AG04450 (cell line): ENCODE measurements at regions of chr13 and their contacts with region 1.

Region 1: GRCh38 chr13:45280751-45281634 is 60.0 kb downstream of the TPT1 start:
- DNase-seq: peak; percentile 54
- H3K4me3 ChIP-seq: no peak overlapping the region
- H3K27ac ChIP-seq: no peak overlapping the region
- H3K27me3 ChIP-seq: no peaks in the 10 kb centered on the region
- CTCF ChIP-seq: peak; percentile 88

Region 2: DNA sequence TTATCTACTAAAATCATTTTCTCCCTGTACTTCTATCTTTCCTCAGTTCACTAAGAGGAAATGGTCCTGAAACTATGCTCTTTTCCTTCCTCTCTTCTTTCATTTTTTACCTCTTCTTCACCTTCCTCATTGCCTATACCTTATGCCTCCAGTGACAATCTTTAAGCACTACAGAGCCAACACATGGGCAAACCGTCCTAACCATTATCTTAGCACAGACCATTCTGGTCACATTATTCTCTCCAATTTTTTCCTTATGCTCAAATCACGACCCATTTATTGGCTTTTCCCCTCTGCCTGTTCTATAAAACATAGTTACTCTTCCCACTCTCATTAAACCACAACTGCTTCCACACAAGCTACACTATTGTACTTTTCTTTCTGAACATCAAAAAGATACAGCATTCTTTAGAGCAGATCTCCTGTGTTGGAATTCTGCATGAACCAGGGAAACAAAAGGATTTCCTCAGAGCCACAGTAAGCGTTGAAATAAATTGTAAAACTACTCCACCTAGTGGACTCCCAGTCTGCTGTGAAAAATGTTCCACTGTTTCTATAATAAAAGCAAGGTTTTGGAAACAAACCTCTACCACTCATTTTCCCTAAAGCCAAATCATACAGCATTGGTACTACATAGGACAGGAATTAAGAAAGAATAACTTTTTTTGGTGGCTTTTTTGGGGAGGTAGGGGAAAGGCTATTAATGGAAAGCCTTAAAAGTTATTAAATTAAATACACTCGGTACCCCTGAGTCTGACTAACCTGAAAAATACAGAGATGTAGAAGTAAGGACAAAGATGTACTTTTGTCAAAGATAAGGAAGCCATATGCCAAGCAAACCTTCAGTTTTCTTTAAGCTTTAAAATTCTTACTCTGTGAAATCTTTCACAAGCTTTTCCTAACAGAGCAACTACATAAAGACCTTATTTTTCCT is 311.2 kb before region 1 on chr13:
- CTCF ChIA-PET with region 1: interaction called, 12 read pairs
- POLR2A ChIA-PET with region 1: no interaction called
- DNase-seq: peak; percentile 34
- H3K4me3 ChIP-seq: no peak overlapping the region
- H3K27ac ChIP-seq: no peak overlapping the region
- H3K27me3 ChIP-seq: no peaks in the 10 kb centered on the region
- CTCF ChIP-seq: peak; percentile 73

Region 3: DNA sequence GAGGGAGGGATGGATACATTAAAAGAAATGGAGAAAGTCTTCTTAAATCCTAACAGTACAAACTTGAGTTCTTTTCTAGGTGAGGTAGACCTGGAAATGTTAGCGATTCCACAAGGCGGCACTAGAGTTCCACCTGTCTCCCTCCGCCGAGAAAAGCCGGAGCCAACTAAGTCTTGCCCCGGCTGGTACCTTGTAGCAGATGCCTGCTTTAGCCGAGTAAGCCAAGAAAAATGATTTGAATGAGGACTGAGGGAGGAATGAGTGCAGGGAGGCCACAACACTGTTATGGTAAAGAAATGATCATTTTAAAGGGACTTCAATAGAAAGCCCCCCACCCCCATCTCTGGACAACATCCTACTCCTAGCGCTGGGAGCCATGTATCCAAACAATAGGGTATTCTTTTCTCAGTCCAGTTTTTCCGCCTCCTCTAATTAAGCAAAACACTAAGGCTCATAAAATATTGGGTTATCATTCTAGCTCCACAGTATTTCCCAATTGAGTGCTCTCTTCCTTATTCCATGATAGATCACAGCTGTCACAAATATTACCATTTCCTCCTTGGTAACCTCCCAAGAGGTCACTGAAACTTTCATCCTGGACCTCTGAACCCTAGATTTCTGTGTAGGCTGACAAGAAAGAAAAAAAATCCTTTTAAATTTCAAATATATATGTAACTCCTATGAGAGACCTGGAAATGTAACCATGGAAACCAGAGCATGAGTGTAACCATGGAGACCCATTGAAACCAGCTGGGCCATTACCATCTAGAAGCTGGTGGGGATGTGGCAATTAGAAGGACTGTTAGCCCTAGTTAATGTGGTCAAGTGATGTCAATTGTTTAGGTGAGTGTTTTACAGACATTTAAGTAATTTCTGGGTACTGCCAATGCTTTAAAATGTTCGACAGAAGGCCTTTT is 233.3 kb before region 1 on chr13:
- CTCF ChIA-PET with region 1: interaction called, 125 read pairs
- POLR2A ChIA-PET with region 1: no interaction called
- DNase-seq: peak; percentile 74
- H3K4me3 ChIP-seq: peak overlapping the region; percentile 57
- H3K27ac ChIP-seq: no peak overlapping the region
- H3K27me3 ChIP-seq: no peaks in the 10 kb centered on the region
- CTCF ChIP-seq: peak; percentile 93

Region 4: GRCh38 chr13:45194081-45194939 is 86.7 kb before region 1 on chr13:
- CTCF ChIA-PET with region 1: interaction called, 15 read pairs
- POLR2A ChIA-PET with region 1: no interaction called
- DNase-seq: no peak
- H3K4me3 ChIP-seq: no peak overlapping the region
- H3K27ac ChIP-seq: no peak overlapping the region
- H3K27me3 ChIP-seq: no peaks in the 10 kb centered on the region
- CTCF ChIP-seq: peak; percentile 44

Region 5: DNA sequence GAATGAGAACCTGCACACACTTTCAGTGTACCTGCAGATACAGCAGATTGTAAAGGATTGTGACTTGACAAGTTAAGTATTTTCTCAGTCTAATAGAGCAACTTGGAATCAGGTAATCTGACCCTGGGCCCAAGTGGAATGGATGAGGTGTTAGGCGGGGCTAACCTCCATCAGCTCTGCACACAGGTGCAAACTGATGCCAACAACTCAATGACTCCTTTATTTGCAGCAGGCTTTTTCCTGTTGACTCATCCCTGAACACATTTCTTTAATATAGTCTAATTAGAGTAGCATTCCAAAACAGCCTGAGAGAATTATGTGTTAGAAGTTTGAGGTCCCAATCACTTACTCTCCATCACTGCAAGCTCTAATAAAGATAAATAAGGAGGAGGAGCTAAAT is 11.2 kb after region 1 on chr13:
- CTCF ChIA-PET with region 1: interaction called, 16 read pairs
- POLR2A ChIA-PET with region 1: no interaction called
- DNase-seq: no peak
- H3K4me3 ChIP-seq: no peak overlapping the region
- H3K27ac ChIP-seq: no peak overlapping the region
- H3K27me3 ChIP-seq: no peaks in the 10 kb centered on the region
- CTCF ChIP-seq: no peak

Region 6: GRCh38 chr13:45310341-45311125 is 29.5 kb after region 1 on chr13:
- CTCF ChIA-PET with region 1: interaction called, 11 read pairs
- POLR2A ChIA-PET with region 1: no interaction called
- DNase-seq: no peak
- H3K4me3 ChIP-seq: no peak overlapping the region
- H3K27ac ChIP-seq: no peak overlapping the region
- H3K27me3 ChIP-seq: no peaks in the 10 kb centered on the region
- CTCF ChIP-seq: no peak